ENCODE measurements at regions of chr10 and their contacts with region 1.

Region 1: DNA sequence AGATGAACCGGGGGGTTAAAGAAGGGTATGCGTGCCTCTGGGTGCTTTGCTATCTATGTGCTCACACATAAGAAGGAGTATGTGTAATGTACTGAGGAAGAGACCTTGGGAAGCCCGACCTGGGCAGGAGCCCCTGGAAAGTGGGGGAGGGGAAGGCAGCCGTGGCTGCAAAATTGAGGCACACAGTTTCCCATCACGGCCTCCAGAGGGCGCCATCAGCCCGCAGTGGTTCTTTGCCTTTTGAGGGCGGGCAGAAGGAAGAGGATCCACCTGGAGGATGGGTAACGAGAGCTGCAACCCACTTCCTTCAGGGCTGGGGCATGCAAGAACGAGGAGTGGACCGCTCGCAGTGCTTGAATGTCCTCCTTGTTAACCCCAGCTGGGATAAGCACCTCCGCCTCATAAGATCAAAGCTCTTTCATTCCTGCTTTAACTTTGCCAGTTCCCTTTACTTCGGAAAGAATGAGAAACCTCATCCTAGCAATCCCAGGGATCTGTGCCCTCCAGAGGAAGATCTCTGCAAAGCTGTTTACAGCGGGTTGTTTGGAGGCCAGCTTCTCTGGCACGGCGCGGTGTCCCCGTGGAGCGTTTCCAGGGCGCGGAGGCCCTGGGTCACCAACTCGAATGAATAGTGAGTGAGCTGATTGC is 77.9 kb downstream of the PCGF5 start:
- DNase-seq: peak; percentile 75 to 80 (median 77)
- H3K4me3 ChIP-seq: peak overlapping the region; percentile 30 to 55
- H3K4me3 Mint-ChIP-seq: peak overlapping the region; percentile 66 to 81 (median 74)
- H3K27ac ChIP-seq: no peak overlapping the region
- H3K27ac Mint-ChIP-seq: peak overlapping the region in 3 of 7 donors; percentile 3 to 91 (median 59)
- H3K4me1 ChIP-seq: peaks cover 11% of the 10 kb centered on the region
- H3K4me1 Mint-ChIP-seq: peaks cover 0 to 10% (median 7%) of the 10 kb centered on the region in 4 donors
- H3K27me3 ChIP-seq: no peaks in the 10 kb centered on the region
- H3K27me3 Mint-ChIP-seq: peaks cover 2 to 9% of the 10 kb centered on the region in 2 donors

Region 2: GRCh38 chr10:90451283-90451682 is 847.1 kb before region 1 on chr10:
- CTCF ChIA-PET with region 1: no interaction called
- POLR2A ChIA-PET with region 1: no interaction called
- intact Hi-C with region 1: no loop called
- DNase-seq: no peak
- H3K4me3 ChIP-seq: no peak overlapping the region
- H3K4me3 Mint-ChIP-seq: no peak overlapping the region
- H3K27ac ChIP-seq: no peak overlapping the region
- H3K27ac Mint-ChIP-seq: no peak overlapping the region
- H3K4me1 ChIP-seq: no peaks in the 10 kb centered on the region
- H3K4me1 Mint-ChIP-seq: no peaks in the 10 kb centered on the region
- H3K27me3 ChIP-seq: no peaks in the 10 kb centered on the region
- H3K27me3 Mint-ChIP-seq: no peaks in the 10 kb centered on the region

Region 3: DNA sequence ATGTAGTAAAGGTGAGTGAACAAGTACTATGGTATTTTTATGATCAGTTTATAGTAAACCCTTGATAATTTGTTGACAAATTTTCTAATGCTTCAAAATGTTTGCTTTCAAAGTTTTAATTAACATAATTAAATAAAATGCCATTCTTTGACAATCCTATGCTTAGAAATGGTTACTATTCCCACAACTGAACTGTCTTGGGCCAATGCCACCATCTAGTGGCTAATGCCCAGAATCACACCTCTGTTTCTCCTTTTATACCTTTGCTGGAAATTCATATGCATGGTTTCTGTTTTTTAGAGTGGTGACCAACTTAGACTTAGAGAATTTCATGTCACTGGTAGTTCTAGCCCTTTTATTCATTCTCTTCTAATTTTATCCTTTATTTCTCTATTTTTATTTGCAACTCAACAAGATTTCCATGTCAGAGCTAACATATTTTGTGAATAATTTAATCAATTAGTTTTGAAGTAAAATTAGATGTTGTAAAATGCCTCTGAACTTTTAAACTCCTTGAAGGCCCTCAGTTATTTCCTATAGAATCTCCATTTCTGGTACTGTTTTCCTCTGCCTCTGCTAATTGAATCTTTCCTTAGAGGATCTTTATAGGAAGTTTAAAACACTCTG is 46.8 kb before region 1 on chr10:
- CTCF ChIA-PET with region 1: interaction called, 16 read pairs
- POLR2A ChIA-PET with region 1: no interaction called
- intact Hi-C with region 1: no loop called
- DNase-seq: peak; percentile 50 to 69 (median 66)
- H3K4me3 ChIP-seq: no peak overlapping the region
- H3K4me3 Mint-ChIP-seq: no peak overlapping the region
- H3K27ac ChIP-seq: no peak overlapping the region
- H3K27ac Mint-ChIP-seq: peak overlapping the region in 1 of 7 donors; percentile 10
- H3K4me1 ChIP-seq: peaks cover 22% of the 10 kb centered on the region
- H3K4me1 Mint-ChIP-seq: peaks cover 5 to 9% (median 6%) of the 10 kb centered on the region in 4 donors
- H3K27me3 ChIP-seq: no peaks in the 10 kb centered on the region
- H3K27me3 Mint-ChIP-seq: no peaks in the 10 kb centered on the region

Region 4: GRCh38 chr10:91389636-91390512 is 91.5 kb after region 1 on chr10:
- CTCF ChIA-PET with region 1: interaction called, 26 read pairs
- POLR2A ChIA-PET with region 1: no interaction called
- intact Hi-C with region 1: loop called (anchors 1 kb)
- DNase-seq: peak; percentile 45 to 74 (median 69)
- H3K4me3 ChIP-seq: no peak overlapping the region
- H3K4me3 Mint-ChIP-seq: peak overlapping the region in 3 of 8 donors; percentile 9 to 55 (median 30)
- H3K27ac ChIP-seq: no peak overlapping the region
- H3K27ac Mint-ChIP-seq: no peak overlapping the region
- H3K4me1 ChIP-seq: peaks cover 4% of the 10 kb centered on the region
- H3K4me1 Mint-ChIP-seq: peaks cover 4 to 10% (median 5%) of the 10 kb centered on the region in 4 donors
- H3K27me3 ChIP-seq: no peaks in the 10 kb centered on the region
- H3K27me3 Mint-ChIP-seq: peaks cover 8 to 19% of the 10 kb centered on the region in 2 donors

Region 5: GRCh38 chr10:91632671-91633550 is 334.6 kb after region 1 on chr10 and contains the start of gene PPP1R3C:
- CTCF ChIA-PET with region 1: interaction called, 149 read pairs
- POLR2A ChIA-PET with region 1: interaction called, 4 read pairs
- intact Hi-C with region 1: loop called (anchors 1 kb)
- DNase-seq: peak; percentile 9 to 42 (median 15)
- H3K4me3 ChIP-seq: peak within 1 kb of the TSS in 1 of 2 donors; percentile 12
- H3K4me3 Mint-ChIP-seq: peak within 1 kb of the TSS; percentile 44 to 75 (median 68)
- H3K27ac ChIP-seq: no peak within 1 kb of the TSS
- H3K27ac Mint-ChIP-seq: no peak within 1 kb of the TSS
- H3K4me1 ChIP-seq: peaks cover 4% of the 10 kb centered on the region
- H3K4me1 Mint-ChIP-seq: peaks cover 0 to 8% (median 5%) of the 10 kb centered on the region in 4 donors
- H3K27me3 ChIP-seq: peaks cover 25% of the 10 kb centered on the region
- H3K27me3 Mint-ChIP-seq: peaks cover 44 to 47% of the 10 kb centered on the region in 2 donors
- total RNA-seq, gene PPP1R3C: not detected

Region 6: GRCh38 chr10:91758303-91759146 is 460.2 kb after region 1 on chr10:
- CTCF ChIA-PET with region 1: interaction called, 15 read pairs
- POLR2A ChIA-PET with region 1: no interaction called
- intact Hi-C with region 1: loop called (anchors 2 kb)
- DNase-seq: peak in 4 of 5 donors; percentile 49 to 62 (median 55)
- H3K4me3 ChIP-seq: no peak overlapping the region
- H3K4me3 Mint-ChIP-seq: no peak overlapping the region
- H3K27ac ChIP-seq: no peak overlapping the region
- H3K27ac Mint-ChIP-seq: no peak overlapping the region
- H3K4me1 ChIP-seq: no peaks in the 10 kb centered on the region
- H3K4me1 Mint-ChIP-seq: peaks cover 0 to 2% (median 0%) of the 10 kb centered on the region in 4 donors
- H3K27me3 ChIP-seq: no peaks in the 10 kb centered on the region
- H3K27me3 Mint-ChIP-seq: peaks cover 11% of the 10 kb centered on the region in 2 donors